Left cardiac atrium (tissue), 4 donors: ENCODE measurements at regions of chr4 and their contacts with region 1.

Region 1: GRCh38 chr4:34826660-34827059 is 1417.7 kb downstream of the ARAP2 start:
- DNase-seq: no peak
- ATAC-seq: no peak

Region 2: DNA sequence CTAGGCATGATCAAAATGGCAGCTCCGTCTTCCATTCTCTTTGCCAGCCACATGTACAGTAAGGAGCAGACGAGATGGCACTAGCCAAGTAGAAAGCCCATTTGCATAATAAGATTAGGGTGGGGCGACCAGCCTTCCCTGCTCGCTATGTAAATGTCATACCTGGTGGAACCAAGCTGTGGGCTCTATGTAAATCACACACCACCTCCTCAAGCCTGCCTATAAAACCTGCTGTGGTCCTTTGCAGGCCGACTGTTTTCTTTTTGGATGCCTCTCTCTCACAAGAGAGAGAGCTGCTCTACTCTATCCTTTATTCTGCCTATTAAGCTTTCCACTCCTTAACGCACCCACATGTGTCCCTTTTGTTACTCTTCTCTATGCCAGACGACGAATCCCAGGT is 55.0 kb before region 1 on chr4:
- intact Hi-C with region 1: loop called in 1 of 2 experiments (anchors 2 kb)
- DNase-seq: no peak
- ATAC-seq: no peak

Region 3: DNA sequence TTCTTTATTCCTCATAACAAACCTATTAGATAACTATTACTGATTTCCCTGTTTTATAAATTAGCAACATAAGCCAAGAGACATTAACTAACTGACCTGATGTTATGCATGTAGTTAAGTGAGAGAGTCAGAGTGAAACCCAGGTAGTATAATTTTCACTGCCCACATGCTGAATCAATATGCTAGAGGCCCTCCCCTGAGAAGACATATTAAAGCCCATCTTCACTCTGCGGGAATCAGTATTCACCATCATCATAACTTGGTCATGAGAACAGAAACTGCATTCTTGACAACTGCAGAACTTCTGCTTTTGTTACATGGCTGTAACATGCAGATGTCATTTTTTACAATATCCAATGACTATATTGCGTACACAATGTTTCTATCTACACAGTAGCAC is 93.4 kb after region 1 on chr4:
- intact Hi-C with region 1: no loop called
- DNase-seq: no peak
- ATAC-seq: no peak